ENCODE measurements at regions of chr5 and their contacts with region 1.

Region 1: DNA sequence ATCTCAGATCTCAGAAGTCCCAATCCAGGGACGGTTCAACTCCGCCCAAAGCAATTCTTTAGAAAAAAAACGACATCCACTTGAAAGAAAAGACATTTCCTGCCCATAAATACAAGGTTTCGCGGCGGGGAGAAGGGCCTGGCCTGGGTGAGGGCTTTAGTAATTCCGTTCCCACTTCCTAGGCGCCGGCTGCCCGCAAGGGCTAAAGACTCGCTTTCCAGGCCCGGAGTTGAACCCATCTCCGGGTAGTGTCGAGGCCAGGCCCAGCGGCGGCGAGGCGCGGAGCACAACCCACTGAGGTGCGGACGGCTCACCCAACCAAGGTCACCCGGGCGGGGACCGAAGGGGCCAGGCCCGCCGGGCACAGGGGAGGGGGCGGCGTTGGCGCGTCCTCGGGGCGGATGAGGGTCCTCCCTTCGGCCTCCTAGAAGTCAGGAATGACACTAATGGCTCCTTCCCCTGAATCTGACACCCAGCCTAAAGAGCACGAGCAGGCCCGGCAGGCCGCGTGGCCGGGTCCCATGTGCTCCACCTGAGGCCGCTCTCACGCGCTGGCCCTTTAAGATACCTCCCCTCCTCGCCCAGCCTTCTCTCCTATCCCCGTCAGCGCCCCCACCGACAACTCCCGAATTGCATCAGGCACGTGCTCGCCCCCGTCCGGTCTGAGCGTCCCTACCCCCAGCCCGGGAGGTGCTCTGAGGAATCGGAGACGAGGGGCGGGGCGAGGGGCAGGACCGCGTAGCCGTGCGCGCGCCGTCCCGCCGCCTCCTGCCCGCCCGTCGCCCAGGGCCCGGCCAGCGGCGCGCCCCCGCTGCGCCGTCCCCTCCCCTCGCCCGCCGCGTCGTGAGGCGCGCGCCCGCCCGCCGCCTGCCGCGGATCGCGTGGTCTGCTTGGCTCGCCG is 467 bp upstream of the LARP1 start:
- DNase-seq: peak; percentile 99 to 100 (median 100)
- ATAC-seq: peak; percentile 92 to 95 (median 94)
- H3K4me3 ChIP-seq: peak overlapping the region; percentile 70 to 100 (median 98)
- H3K27ac ChIP-seq: peak overlapping the region; percentile 94 to 100 (median 99)
- H3K4me1 ChIP-seq: peaks cover 0 to 45% (median 35%) of the 10 kb centered on the region in 12 donors
- H3K27me3 ChIP-seq: no peaks in the 10 kb centered on the region
- CTCF ChIP-seq: peak in 10 of 12 donors; percentile 25 to 66 (median 37)
- POLR2A ChIP-seq: peak in 1 of 2 donors; percentile 86

Region 2: DNA sequence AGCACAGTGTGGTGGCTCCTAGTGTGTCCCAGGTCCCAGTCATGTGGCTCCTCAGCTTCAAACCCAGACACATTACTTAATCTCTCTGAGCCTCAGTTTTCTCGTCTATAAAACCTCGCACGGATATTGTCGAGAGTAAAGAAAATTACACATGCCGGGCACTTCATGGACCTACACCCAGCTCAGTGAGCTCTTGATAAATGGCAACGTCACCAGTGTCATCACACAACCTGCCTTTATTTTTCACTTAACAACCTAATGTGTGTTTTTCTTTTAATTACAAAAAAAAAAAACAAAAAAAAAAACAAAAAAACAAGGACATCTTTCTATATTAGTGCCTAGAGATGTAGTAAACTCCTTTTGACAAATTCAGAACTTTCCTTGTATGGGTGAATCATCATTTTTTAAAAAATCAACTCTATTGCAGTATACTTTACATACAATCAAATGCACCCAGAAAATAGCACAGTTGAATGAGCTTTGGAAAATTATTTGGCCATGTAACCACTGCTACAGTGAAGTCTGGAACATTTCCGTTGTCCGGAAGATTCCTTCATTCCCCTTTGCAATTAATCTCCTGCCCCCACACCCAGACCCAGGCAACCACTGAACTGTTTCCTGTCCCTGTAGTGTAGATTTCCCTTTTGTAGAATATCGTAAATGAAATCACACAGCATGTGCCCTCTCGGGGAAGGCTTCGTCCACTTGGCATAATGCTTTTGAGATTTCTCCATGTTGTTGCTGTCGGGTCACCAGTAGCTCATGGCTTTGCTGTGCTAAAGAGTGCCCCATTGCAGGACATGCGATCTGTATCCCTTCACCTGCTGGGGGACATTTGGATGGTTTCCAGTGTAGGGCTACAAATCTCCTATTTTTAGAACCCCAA is 100.0 kb before region 1 on chr5:
- intact Hi-C with region 1: loop called in 2 of 10 experiments (anchors 5 to 10 kb)
- DNase-seq: no peak
- ATAC-seq: peak in 3 of 4 donors; percentile 30 to 54 (median 46)
- H3K4me3 ChIP-seq: peak overlapping the region in 8 of 12 donors; percentile 3 to 31 (median 13)
- H3K27ac ChIP-seq: peak overlapping the region in 10 of 12 donors; percentile 9 to 69 (median 42)
- H3K4me1 ChIP-seq: peaks cover 0 to 23% (median 16%) of the 10 kb centered on the region in 12 donors
- H3K27me3 ChIP-seq: no peaks in the 10 kb centered on the region
- CTCF ChIP-seq: no peak
- POLR2A ChIP-seq: no peak

Region 3: GRCh38 chr5:154683101-154683880 is 71.4 kb before region 1 on chr5:
- intact Hi-C with region 1: loop called (anchors 2 to 10 kb)
- DNase-seq: no peak
- ATAC-seq: no peak
- H3K4me3 ChIP-seq: peak overlapping the region; percentile 23 to 69 (median 54)
- H3K27ac ChIP-seq: peak overlapping the region; percentile 59 to 88 (median 84)
- H3K4me1 ChIP-seq: peaks cover 0 to 25% (median 7%) of the 10 kb centered on the region in 12 donors
- H3K27me3 ChIP-seq: no peaks in the 10 kb centered on the region
- CTCF ChIP-seq: no peak
- POLR2A ChIP-seq: no peak

Region 4: DNA sequence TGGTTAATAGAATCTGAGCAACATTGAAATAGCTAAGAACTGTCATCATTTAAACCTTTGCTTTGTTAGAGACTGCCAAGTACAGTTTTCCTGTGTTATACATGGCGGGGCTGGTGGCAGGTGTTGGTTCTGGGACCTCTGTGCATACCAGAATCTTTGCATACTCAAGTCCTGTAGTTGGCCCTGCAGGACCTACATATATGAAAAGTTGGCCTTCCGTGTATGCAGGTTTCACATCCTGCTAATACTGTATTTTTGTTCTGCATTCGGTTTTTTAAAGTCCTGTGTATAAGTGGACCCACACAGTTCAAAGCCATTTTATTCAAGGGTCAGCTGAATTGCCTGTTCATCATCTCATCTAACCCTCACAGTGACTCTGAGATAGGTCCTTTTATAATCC is 36.8 kb after region 1 on chr5:
- intact Hi-C with region 1: loop called in 3 of 10 experiments (anchors 5 kb)
- DNase-seq: no peak
- ATAC-seq: no peak
- H3K4me3 ChIP-seq: no peak overlapping the region
- H3K27ac ChIP-seq: no peak overlapping the region
- H3K4me1 ChIP-seq: peaks cover 5 to 65% (median 39%) of the 10 kb centered on the region in 12 donors
- H3K27me3 ChIP-seq: no peaks in the 10 kb centered on the region
- CTCF ChIP-seq: no peak
- POLR2A ChIP-seq: no peak

Region 5: DNA sequence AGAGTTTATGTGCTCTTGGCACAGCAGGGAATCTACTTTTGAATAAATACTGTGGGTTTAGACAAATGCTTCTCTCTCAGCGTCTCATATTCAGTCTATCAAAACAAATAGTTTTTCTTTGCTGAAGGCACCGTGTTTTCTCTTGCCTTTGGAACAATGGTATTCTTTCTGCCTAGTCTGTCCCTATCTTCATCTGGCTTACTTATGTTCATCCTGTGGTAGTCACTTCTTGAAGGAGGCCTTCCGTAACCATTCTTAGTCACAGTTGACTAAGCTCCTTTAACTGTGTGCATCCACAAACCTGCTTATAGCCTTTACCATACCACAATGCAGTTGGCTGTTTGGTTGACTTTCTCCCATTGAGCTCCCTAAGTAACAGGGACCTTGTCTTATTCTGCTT is 46.4 kb after region 1 on chr5:
- intact Hi-C with region 1: loop called in 3 of 10 experiments (anchors 5 to 10 kb)
- DNase-seq: no peak
- ATAC-seq: no peak
- H3K4me3 ChIP-seq: no peak overlapping the region
- H3K27ac ChIP-seq: peak overlapping the region in 1 of 12 donors; percentile 17
- H3K4me1 ChIP-seq: peaks cover 0 to 9% (median 0%) of the 10 kb centered on the region in 12 donors
- H3K27me3 ChIP-seq: no peaks in the 10 kb centered on the region
- CTCF ChIP-seq: no peak
- POLR2A ChIP-seq: no peak

Region 6: DNA sequence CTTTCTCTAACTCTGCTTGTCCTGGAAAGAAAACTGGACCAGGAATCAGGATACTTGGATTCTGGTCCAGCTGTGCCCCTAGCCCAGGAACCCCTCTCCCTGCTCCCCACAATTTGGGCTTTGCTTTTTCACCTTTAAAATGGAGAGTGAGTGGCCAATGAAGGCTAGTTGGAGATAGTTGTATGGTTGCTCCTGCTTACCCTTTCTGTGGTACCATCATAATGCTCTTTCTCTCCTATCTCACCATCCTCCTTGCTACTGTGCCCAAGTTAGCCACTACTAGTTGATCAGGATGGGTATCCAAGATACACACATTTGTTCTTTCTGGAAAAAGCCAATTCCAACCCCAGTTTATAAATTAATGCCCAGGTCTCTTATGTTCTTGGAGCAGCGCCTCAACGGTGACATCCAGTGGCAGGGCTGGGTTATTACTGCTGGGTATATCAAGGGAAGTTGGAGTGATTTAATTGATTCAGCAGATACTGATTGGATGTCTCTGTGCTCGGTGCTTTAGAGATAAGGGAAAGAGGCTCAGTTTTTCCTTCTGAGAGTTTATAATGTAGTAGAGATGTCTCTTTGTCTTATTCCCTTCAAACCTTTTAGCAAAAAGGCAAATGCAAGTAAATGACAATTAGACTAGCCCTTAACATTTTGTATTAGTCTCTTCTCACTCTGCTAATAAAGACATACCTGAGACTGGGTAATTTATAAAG is 57.1 kb after region 1 on chr5:
- intact Hi-C with region 1: loop called in 4 of 10 experiments (anchors 5 to 10 kb)
- DNase-seq: peak in 4 of 5 donors; percentile 47 to 59 (median 56)
- ATAC-seq: peak; percentile 16 to 70 (median 62)
- H3K4me3 ChIP-seq: no peak overlapping the region
- H3K27ac ChIP-seq: peak overlapping the region in 2 of 12 donors; percentile 29 to 32
- H3K4me1 ChIP-seq: peaks cover 0 to 9% (median 0%) of the 10 kb centered on the region in 12 donors
- H3K27me3 ChIP-seq: no peaks in the 10 kb centered on the region
- CTCF ChIP-seq: peak; percentile 80 to 94 (median 89)
- POLR2A ChIP-seq: no peak

Region 7: DNA sequence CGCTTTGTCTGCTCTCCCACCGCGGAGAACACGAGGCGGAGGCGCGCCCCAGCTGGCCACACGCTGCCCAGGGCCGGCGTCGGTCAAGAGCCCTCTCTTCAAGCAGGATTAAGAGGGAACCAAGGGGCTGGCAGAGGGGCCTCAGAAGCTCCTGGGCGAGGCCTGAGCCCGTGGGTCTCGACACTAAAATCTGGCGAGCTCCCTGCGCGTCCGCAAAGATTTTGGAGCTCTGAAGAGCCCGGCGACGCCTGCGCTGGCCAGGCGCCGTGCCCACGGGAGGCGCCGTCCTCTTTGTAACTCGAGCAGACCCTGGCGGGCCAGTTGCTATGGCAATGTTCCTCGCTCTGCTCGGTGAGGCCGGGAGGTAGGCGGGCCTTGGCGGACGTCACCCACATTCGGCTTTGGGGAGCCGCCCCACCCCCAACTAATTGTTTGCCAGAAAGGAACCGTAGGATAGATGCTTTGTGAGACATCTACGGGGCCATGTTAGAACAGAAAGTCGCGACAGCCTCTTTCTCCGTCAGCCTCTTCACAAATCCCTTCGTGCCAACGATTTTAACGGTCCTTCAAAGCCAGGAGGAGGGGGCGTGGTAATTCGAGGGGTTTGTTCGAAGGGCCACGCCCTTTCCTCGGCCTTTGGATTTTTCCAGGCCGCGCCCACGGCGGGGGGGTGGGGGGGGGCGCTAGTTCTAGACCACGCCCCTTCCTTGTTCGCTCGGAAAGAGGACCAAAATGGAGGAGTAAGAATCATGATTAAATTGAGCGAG is 103.0 kb after region 1 on chr5:
- intact Hi-C with region 1: loop called in 8 of 10 experiments (anchors 1 to 5 kb)
- DNase-seq: peak; percentile 94 to 97 (median 96)
- ATAC-seq: peak; percentile 68 to 84 (median 81)
- H3K4me3 ChIP-seq: peak overlapping the region; percentile 61 to 97 (median 82)
- H3K27ac ChIP-seq: peak overlapping the region; percentile 92 to 100 (median 98)
- H3K4me1 ChIP-seq: peaks cover 3 to 45% (median 35%) of the 10 kb centered on the region in 12 donors
- H3K27me3 ChIP-seq: no peaks in the 10 kb centered on the region
- CTCF ChIP-seq: peak in 3 of 12 donors; percentile 10 to 35 (median 20)
- POLR2A ChIP-seq: peak in 1 of 2 donors; percentile 72